ENCODE measurements at regions of chr17 and their contacts with region 1.

Region 1: DNA sequence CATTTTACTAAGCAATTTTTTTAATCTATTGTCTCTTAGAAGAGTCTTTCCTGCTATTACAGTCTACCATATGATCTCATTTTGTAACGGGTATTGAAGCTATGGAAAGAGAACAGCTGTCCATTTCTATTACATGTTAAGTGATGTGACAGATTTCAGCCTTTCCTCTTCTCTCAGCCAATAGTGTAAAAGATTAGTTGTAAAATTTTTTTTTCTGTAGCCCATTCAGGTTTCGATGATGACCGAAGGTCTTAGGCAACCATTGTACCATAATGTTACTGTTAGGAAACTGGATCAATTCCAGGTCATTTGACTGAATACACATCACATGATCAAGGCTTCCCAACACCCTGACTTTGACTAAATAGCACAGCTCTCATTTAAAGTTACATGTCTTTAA is 147.6 kb upstream of the HLF start:
- DNase-seq: peak; percentile 51
- H3K4me3 ChIP-seq: no peak overlapping the region
- H3K27ac ChIP-seq: peak overlapping the region; percentile 38
- H3K4me1 ChIP-seq: peaks cover 17% of the 10 kb centered on the region
- H3K27me3 ChIP-seq: no peaks in the 10 kb centered on the region
- CTCF ChIP-seq: no peak
- POLR2A ChIP-seq: no peak

Region 2: GRCh38 chr17:54718286-54718685 is 398.9 kb before region 1 on chr17:
- CTCF ChIA-PET with region 1: no interaction called
- POLR2A ChIA-PET with region 1: no interaction called
- dilution Hi-C with region 1: no loop called
- intact Hi-C with region 1: no loop called
- DNase-seq: no peak
- H3K4me3 ChIP-seq: no peak overlapping the region
- H3K27ac ChIP-seq: no peak overlapping the region
- H3K4me1 ChIP-seq: no peaks in the 10 kb centered on the region
- H3K27me3 ChIP-seq: no peaks in the 10 kb centered on the region
- CTCF ChIP-seq: no peak
- POLR2A ChIP-seq: no peak

Region 3: GRCh38 chr17:55161935-55162555 is 44.9 kb after region 1 on chr17:
- CTCF ChIA-PET with region 1: no interaction called
- POLR2A ChIA-PET with region 1: no interaction called
- dilution Hi-C with region 1: no loop called
- intact Hi-C with region 1: loop called (anchors 5 kb)
- DNase-seq: peak; percentile 53
- H3K4me3 ChIP-seq: no peak overlapping the region
- H3K27ac ChIP-seq: peak overlapping the region; percentile 43
- H3K4me1 ChIP-seq: peaks cover 29% of the 10 kb centered on the region
- H3K27me3 ChIP-seq: no peaks in the 10 kb centered on the region
- CTCF ChIP-seq: no peak
- POLR2A ChIP-seq: no peak